ENCODE measurements at regions of chr15 and their contacts with region 1.

Region 1: GRCh38 chr15:29103824-29104565 is 165.6 kb downstream of the NSMCE3 start:
- DNase-seq: peak; percentile 88
- ATAC-seq: peak; percentile 78
- H3K4me3 Mint-ChIP-seq: peak overlapping the region; percentile 31
- H3K27ac Mint-ChIP-seq: no peak overlapping the region
- H3K4me1 Mint-ChIP-seq: peaks cover 31% of the 10 kb centered on the region
- H3K27me3 Mint-ChIP-seq: no peaks in the 10 kb centered on the region
- CTCF ChIP-seq: peak; percentile 67

Region 2: GRCh38 chr15:28884151-28884940 is 219.6 kb before region 1 on chr15:
- CTCF ChIA-PET with region 1: interaction called, 10 read pairs
- POLR2A ChIA-PET with region 1: no interaction called
- DNase-seq: no peak
- ATAC-seq: no peak
- H3K4me3 Mint-ChIP-seq: peak overlapping the region; percentile 55
- H3K27ac Mint-ChIP-seq: no peak overlapping the region
- H3K4me1 Mint-ChIP-seq: peaks cover 9% of the 10 kb centered on the region
- H3K27me3 Mint-ChIP-seq: peaks cover 33% of the 10 kb centered on the region
- CTCF ChIP-seq: no peak

Region 3: GRCh38 chr15:28921919-28922706 is 181.9 kb before region 1 on chr15:
- CTCF ChIA-PET with region 1: interaction called, 44 read pairs
- POLR2A ChIA-PET with region 1: no interaction called
- DNase-seq: peak; percentile 71
- ATAC-seq: peak; percentile 65
- H3K4me3 Mint-ChIP-seq: no peak overlapping the region
- H3K27ac Mint-ChIP-seq: no peak overlapping the region; the same call in 1 of the 2 replicates
- H3K4me1 Mint-ChIP-seq: peaks cover 12% of the 10 kb centered on the region
- H3K27me3 Mint-ChIP-seq: no peaks in the 10 kb centered on the region
- CTCF ChIP-seq: peak; percentile 20; the same call in 1 of the 2 replicates

Region 4: GRCh38 chr15:28984421-28985315 is 119.3 kb before region 1 on chr15:
- CTCF ChIA-PET with region 1: interaction called, 57 read pairs
- POLR2A ChIA-PET with region 1: no interaction called
- DNase-seq: no peak
- ATAC-seq: peak; percentile 64
- H3K4me3 Mint-ChIP-seq: no peak overlapping the region
- H3K27ac Mint-ChIP-seq: no peak overlapping the region
- H3K4me1 Mint-ChIP-seq: peaks cover 10% of the 10 kb centered on the region
- H3K27me3 Mint-ChIP-seq: no peaks in the 10 kb centered on the region
- CTCF ChIP-seq: no peak

Region 5: DNA sequence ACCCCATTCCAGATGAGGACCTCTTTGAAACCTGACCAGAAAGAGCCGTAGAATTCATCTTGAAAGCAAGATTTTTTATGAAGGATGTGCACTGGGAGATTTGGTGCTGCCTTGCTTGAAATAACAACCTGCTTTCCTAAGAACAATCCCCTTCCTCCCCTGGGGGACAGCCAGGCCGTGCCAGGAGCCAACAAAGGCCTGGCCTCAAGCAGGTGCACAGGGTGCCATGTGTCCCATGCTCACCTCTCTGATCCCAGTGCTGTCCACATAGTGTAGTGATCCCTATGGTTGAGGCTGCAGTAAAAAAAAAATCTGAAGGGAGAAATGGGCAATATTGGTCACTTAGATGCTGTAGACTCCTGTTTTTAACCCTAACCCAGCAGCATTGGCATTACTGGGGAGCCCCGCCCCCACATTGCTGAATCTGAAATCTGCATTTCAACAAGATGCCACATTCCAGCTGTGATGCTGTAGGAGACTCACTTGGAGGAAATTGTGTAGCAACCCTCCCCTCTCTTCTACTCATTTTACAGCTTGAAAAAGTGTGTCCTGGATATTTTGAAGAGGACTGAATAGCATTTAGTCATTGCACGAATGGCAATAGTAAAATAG is 47.0 kb before region 1 on chr15:
- CTCF ChIA-PET with region 1: interaction called, 11 read pairs
- POLR2A ChIA-PET with region 1: no interaction called
- DNase-seq: peak; percentile 55
- ATAC-seq: peak; percentile 84
- H3K4me3 Mint-ChIP-seq: peak overlapping the region; percentile 8; the same call in 1 of the 2 replicates
- H3K27ac Mint-ChIP-seq: peak overlapping the region; percentile 28; the same call in 1 of the 2 replicates
- H3K4me1 Mint-ChIP-seq: peaks cover 35% of the 10 kb centered on the region
- H3K27me3 Mint-ChIP-seq: no peaks in the 10 kb centered on the region; the same call in 1 of the 2 replicates
- CTCF ChIP-seq: no peak

Region 6: DNA sequence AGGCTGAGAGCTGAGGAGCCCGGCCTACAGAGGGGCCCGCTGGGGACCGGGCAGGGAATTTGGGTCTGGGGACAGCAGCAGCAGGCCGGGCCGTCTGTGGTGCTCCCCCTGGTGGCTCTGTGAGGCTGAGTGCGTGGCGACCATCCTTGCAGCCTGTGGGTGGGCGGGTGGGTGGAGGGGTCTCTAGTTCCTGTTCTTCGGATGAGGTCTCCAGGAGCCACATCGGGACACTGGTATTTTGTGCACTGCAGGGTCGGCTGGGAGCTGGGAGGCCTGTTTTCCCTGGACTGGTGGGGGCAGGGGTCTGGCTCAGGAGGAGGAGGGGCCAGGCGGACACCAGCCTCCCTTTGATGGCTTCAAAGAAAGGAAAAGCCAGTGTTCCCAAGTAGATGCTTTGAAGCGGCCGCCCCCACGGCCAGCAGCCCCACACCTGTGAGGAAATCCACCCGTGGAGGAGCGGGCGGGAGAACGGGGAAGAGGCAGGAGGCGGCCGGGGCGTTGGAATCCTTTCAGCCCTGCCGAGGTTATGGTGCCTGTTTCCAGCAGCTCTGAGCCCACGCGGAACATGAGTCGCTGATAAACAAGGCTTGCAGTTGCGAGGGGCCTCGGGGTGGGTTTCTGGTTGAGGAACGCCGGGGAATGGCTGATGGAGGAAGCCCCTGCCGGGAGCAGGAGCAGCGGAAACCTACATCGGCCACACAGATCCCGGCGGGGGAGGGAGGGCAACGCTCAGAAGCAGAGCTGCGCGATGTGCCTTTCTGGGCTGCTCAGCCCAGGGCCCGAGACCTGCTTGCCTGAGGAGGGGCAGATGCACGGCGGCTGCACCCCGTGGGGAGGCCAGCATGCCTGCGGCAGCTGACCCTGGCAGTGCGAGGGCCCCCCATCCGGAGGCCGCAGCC is 11.3 kb after region 1 on chr15:
- CTCF ChIA-PET with region 1: interaction called, 196 read pairs
- POLR2A ChIA-PET with region 1: no interaction called
- DNase-seq: peak; percentile 69
- ATAC-seq: peak; percentile 73
- H3K4me3 Mint-ChIP-seq: peak overlapping the region; percentile 59
- H3K27ac Mint-ChIP-seq: no peak overlapping the region
- H3K4me1 Mint-ChIP-seq: peaks cover 10% of the 10 kb centered on the region
- H3K27me3 Mint-ChIP-seq: no peaks in the 10 kb centered on the region
- CTCF ChIP-seq: peak; percentile 44; the same call in 1 of the 2 replicates

Region 7: DNA sequence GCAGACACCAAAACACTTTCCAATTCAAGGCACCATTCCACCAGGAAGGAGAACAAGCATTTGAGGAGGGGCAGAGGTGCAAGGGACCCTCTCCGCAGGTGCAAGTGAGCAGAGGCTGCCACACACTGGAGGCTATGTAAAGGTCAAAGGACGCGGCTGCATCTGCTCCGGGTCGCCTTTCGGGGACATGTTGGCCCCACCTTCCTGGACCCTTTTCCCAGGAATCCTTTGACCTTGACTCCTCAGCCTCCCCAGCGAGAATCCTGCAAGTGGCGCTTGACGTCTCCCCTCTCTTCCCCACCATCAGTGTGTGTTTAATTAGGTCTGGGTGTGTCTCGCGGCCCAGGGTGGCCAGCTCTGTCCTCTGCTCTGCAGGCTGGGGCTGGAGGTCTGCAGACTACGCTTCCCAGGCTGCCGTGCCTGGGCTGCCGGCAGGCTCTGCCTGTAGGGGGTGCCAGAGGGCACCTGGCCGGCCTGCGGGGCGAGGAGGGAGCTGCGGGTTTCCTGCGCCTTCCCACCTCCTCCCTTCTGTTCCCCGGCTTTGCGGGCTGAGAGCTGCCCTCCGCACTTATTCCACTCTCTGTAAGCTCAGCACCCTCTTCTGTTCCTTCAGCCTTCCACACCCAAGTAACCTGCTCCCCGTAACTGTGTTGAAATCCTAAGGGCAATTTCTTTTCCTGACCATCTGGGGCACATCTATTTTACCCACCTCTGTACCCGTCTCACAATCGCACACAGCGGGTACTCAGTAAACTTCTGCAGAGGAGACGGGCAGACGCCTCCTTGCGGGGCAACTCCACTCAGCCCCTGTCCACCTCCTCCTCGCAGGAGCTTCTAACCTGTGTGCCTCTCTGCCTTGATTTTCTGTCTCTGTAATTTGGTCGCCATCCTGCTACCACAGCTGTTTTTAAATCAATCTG is 35.8 kb after region 1 on chr15:
- CTCF ChIA-PET with region 1: interaction called, 70 read pairs
- POLR2A ChIA-PET with region 1: no interaction called
- DNase-seq: peak; percentile 89
- ATAC-seq: peak; percentile 93
- H3K4me3 Mint-ChIP-seq: peak overlapping the region; percentile 75
- H3K27ac Mint-ChIP-seq: peak overlapping the region; percentile 29
- H3K4me1 Mint-ChIP-seq: peaks cover 28% of the 10 kb centered on the region
- H3K27me3 Mint-ChIP-seq: no peaks in the 10 kb centered on the region
- CTCF ChIP-seq: peak; percentile 87

Region 8: DNA sequence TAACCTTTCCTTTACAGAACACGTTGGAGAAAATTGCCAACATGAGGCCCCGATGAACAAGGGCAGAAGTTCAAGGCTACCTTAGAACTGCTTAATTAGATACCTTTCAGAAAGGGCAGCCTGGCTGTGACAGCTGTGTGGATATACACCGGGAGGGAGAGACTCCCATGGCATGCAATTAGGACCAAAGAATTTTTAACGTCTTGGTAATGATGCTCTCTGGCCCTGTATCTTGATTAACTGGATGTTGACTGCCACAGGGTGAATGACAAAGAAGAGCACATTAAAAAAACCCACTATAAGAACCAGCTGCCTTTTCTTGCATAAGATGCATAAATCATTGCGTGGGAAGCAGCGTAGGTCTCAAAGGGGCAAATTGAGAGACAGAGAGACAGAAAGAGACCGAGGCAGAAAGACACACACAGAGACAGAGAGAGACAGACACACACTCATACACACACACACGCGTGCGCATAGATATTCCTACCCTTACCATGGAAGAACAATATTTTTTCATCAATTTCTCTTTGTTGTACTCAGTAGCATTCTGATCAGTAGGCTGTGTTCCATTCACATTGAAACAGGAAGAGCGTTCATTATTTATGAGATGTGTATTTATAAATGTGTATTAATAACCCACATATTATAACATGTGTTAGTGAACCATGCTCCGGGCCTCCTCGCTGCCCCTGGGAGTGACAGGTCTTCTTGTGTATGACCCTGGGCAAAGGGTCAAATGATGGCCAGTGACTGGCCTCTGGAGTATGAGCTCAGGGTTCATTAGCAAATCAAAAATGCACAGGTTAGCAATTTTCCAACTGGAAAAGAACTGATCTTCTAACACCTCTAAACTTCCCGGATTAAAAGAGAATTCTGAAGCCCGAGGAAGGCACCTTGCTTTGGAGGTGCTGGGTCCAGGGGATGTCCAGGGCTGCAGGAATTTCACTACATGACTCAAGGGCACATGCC is 46.8 kb after region 1 on chr15:
- CTCF ChIA-PET with region 1: no interaction called
- POLR2A ChIA-PET with region 1: no interaction called
- DNase-seq: no peak
- ATAC-seq: no peak
- H3K4me3 Mint-ChIP-seq: no peak overlapping the region
- H3K27ac Mint-ChIP-seq: no peak overlapping the region
- H3K4me1 Mint-ChIP-seq: no peaks in the 10 kb centered on the region
- H3K27me3 Mint-ChIP-seq: no peaks in the 10 kb centered on the region
- CTCF ChIP-seq: no peak

Region 9: DNA sequence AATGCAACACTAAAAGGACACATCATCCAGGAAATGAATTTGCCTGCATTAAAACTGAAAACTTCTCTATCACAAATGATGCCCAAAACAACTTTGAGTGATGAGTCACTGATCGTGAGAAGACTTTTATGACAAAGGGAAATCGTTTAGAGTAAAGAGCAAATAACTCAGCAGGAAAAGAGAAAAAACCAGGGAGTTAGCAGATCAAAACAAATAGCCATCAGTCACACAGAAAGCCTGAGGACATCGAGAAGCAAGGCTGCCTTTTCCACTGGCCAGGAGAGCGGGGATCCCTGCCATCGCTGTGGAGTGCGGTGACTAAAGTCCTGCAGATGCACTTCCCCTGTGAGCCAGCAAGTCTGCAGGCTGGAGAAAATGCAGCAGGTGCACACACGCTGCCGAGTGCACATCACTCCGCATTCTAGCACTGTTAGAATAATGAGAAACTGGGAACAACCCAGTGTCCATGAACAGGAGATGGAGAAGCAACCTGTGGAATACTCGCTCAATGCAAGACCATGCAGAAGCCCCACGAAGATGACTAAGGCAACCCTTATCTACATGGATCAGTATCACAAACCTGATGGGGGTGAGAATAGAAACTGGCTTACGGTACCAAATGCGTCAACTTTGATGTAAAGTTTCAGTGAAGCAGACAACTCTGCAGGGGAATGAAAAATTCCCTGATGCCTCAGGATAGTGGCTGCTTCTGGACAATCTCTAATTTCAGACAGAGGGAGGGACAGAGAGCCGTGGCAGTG is 79.3 kb after region 1 on chr15:
- CTCF ChIA-PET with region 1: no interaction called
- POLR2A ChIA-PET with region 1: no interaction called
- DNase-seq: no peak
- ATAC-seq: no peak
- H3K4me3 Mint-ChIP-seq: no peak overlapping the region
- H3K27ac Mint-ChIP-seq: no peak overlapping the region
- H3K4me1 Mint-ChIP-seq: no peaks in the 10 kb centered on the region
- H3K27me3 Mint-ChIP-seq: no peaks in the 10 kb centered on the region
- CTCF ChIP-seq: no peak

Region 10: DNA sequence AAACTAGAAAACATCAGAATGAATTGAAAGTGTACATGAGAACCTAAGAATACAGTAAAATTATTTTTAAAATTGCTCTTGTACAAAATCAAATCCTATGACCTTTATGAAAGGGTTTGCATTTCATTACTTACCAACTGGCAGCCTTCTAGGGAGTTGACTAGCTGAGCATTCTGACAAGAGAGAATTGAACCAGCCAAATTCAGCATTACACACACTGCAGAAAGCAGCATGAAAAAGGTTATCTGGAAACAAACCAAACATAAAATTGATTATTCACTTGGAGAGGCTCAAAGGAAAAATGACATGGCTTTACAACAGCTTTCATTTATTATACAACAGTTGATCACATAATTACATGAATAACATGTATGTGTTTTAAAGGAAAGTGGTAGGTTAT is 148.2 kb after region 1 on chr15:
- CTCF ChIA-PET with region 1: no interaction called
- POLR2A ChIA-PET with region 1: no interaction called
- DNase-seq: no peak
- ATAC-seq: no peak
- H3K4me3 Mint-ChIP-seq: no peak overlapping the region
- H3K27ac Mint-ChIP-seq: no peak overlapping the region
- H3K4me1 Mint-ChIP-seq: no peaks in the 10 kb centered on the region
- H3K27me3 Mint-ChIP-seq: no peaks in the 10 kb centered on the region
- CTCF ChIP-seq: no peak

Region 11: GRCh38 chr15:29302871-29303270 is 198.9 kb after region 1 on chr15:
- CTCF ChIA-PET with region 1: no interaction called
- POLR2A ChIA-PET with region 1: no interaction called
- DNase-seq: no peak
- ATAC-seq: no peak
- H3K4me3 Mint-ChIP-seq: no peak overlapping the region
- H3K27ac Mint-ChIP-seq: no peak overlapping the region
- H3K4me1 Mint-ChIP-seq: no peaks in the 10 kb centered on the region
- H3K27me3 Mint-ChIP-seq: no peaks in the 10 kb centered on the region
- CTCF ChIP-seq: no peak

Measured in WTC11 (cell line).